Naive thymus-derived CD4-positive, alpha-beta T cell (primary cell): ENCODE measurements at regions of chr1 and their contacts with region 1.

Region 1: DNA sequence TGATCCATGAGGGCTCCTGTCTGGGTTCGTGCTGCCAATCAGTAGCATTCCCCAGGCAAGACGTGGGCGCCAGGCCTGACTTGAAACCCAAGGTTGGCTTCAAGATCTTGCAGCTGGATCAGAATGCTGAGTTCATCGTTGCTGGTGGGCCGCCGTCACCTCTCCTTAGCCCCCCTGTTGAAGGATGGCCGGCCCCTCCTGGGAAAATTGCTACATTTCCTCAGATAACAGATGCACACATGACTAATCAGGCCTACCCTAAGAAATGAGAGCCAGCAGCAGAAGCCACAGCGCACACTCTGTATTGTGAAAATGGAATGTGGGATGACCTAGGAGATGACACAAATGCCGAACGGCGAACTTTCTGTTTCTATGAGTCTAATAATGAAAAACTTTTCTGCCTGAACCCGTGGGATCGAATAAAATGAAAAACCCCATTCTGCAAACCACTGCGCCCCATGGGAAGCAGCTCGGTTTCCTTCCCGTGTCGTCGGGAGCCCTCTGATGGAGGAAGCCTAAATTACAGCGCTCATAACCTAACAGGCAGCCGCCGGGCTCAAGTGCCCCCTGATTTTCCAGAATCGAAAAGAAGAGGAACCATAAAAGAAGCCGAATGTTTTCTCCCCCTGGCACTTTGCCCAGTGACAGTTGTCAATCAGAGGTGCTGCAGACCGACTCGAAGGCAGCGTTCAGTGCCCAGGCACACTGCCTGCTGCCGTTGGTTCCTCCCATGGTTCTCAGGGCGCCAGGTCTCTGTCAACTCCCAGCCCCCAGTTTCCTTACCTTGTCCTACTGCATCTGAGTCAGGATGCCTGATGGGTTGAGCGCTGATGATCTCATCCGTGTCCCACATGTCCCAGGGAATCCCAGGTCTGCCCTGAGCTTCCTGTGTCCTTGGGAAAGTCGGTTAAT is 38.2 kb upstream of the H6PD start:
- DNase-seq: peak in 8 of 9 donors; percentile 33 to 67 (median 50)
- ATAC-seq: peak; percentile 75
- H3K4me3 ChIP-seq: no peak overlapping the region
- H3K4me3 Mint-ChIP-seq: no peak overlapping the region
- H3K27ac ChIP-seq: no peak overlapping the region
- H3K27ac Mint-ChIP-seq: no peak overlapping the region
- H3K4me1 ChIP-seq: peaks cover 0 to 3% of the 10 kb centered on the region in 2 donors
- H3K4me1 Mint-ChIP-seq: peaks cover 11 to 20% (median 19%) of the 10 kb centered on the region in 7 donors
- H3K27me3 ChIP-seq: peaks cover 3 to 10% of the 10 kb centered on the region in 2 donors
- H3K27me3 Mint-ChIP-seq: peaks cover 46 to 74% (median 57%) of the 10 kb centered on the region in 5 donors

Region 2: GRCh38 chr1:9110669-9111356 is 85.6 kb before region 1 on chr1:
- CTCF ChIA-PET with region 1: interaction called, 20 read pairs
- POLR2A ChIA-PET with region 1: no interaction called
- intact Hi-C with region 1: loop called (anchors 1 kb)
- DNase-seq: peak; percentile 63 to 88 (median 79)
- ATAC-seq: peak; percentile 94
- H3K4me3 ChIP-seq: no peak overlapping the region
- H3K4me3 Mint-ChIP-seq: no peak overlapping the region
- H3K27ac ChIP-seq: no peak overlapping the region
- H3K27ac Mint-ChIP-seq: no peak overlapping the region
- H3K4me1 ChIP-seq: no peaks in the 10 kb centered on the region
- H3K4me1 Mint-ChIP-seq: peaks cover 0 to 27% (median 6%) of the 10 kb centered on the region in 7 donors
- H3K27me3 ChIP-seq: no peaks in the 10 kb centered on the region
- H3K27me3 Mint-ChIP-seq: no peaks in the 10 kb centered on the region